T-cell (primary cell): ENCODE measurements at regions of chr5 and their contacts with region 1.

Region 1: GRCh38 chr5:60710373-60710772 is 10.4 kb upstream of the DEPDC1B start:
- DNase-seq: no peak
- ATAC-seq: no peak
- H3K4me3 ChIP-seq: no peak overlapping the region
- H3K4me3 Mint-ChIP-seq: no peak overlapping the region
- H3K27ac ChIP-seq: no peak overlapping the region
- H3K27ac Mint-ChIP-seq: no peak overlapping the region
- H3K4me1 ChIP-seq: no peaks in the 10 kb centered on the region
- H3K4me1 Mint-ChIP-seq: no peaks in the 10 kb centered on the region
- H3K27me3 ChIP-seq: peaks cover 0 to 4% of the 10 kb centered on the region in 2 experiments
- H3K27me3 Mint-ChIP-seq: peaks cover 9 to 23% of the 10 kb centered on the region in 2 donors

Region 2: GRCh38 chr5:60332244-60333004 is 377.9 kb before region 1 on chr5:
- CTCF ChIA-PET with region 1: interaction called in 1 of 2 experiments, 15 read pairs
- POLR2A ChIA-PET with region 1: no interaction called
- DNase-seq: no peak
- ATAC-seq: no peak
- H3K4me3 ChIP-seq: no peak overlapping the region
- H3K4me3 Mint-ChIP-seq: no peak overlapping the region
- H3K27ac ChIP-seq: no peak overlapping the region
- H3K27ac Mint-ChIP-seq: no peak overlapping the region
- H3K4me1 ChIP-seq: no peaks in the 10 kb centered on the region
- H3K4me1 Mint-ChIP-seq: no peaks in the 10 kb centered on the region
- H3K27me3 ChIP-seq: no peaks in the 10 kb centered on the region
- H3K27me3 Mint-ChIP-seq: no peaks in the 10 kb centered on the region

Region 3: GRCh38 chr5:60522292-60522905 is 188.0 kb before region 1 on chr5:
- CTCF ChIA-PET with region 1: no interaction called
- POLR2A ChIA-PET with region 1: no interaction called
- DNase-seq: no peak
- ATAC-seq: no peak
- H3K4me3 ChIP-seq: no peak overlapping the region
- H3K4me3 Mint-ChIP-seq: no peak overlapping the region
- H3K27ac ChIP-seq: no peak overlapping the region
- H3K27ac Mint-ChIP-seq: no peak overlapping the region
- H3K4me1 ChIP-seq: peaks cover 0 to 24% of the 10 kb centered on the region in 2 experiments
- H3K4me1 Mint-ChIP-seq: no peaks in the 10 kb centered on the region
- H3K27me3 ChIP-seq: no peaks in the 10 kb centered on the region
- H3K27me3 Mint-ChIP-seq: peaks cover 6 to 8% of the 10 kb centered on the region in 2 donors